ENCODE measurements at regions of chr9 and their contacts with region 1.

Region 1: DNA sequence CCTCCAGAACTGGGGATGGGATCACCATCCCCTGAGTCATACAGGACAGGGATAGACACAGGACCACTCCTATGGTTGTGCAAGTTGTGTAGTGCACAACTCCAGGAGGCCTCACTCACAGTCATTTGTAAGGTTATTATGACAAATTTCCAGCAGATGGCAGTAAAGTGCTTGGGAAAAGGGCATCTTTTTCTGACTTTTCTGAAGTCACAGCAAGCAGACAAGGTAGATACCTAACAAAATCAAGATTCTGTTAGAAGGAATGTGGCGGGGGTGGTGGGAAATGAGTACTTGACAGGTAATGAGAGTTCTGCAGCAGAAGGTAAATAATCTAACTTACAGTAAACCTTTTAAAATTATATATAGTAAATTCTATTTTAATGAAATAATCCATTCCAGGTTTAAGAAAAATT is 16.7 kb upstream of the KIF27 start:
- DNase-seq: no peak
- H3K4me3 ChIP-seq: no peak overlapping the region
- H3K27ac ChIP-seq: no peak overlapping the region
- H3K4me1 ChIP-seq: peaks cover 0 to 10% (median 4%) of the 10 kb centered on the region in 4 donors
- H3K27me3 ChIP-seq: no peaks in the 10 kb centered on the region
- CTCF ChIP-seq: peak; percentile 25 to 63 (median 53)
- EP300 ChIP-seq: no peak
- POLR2A ChIP-seq: no peak

Region 2: DNA sequence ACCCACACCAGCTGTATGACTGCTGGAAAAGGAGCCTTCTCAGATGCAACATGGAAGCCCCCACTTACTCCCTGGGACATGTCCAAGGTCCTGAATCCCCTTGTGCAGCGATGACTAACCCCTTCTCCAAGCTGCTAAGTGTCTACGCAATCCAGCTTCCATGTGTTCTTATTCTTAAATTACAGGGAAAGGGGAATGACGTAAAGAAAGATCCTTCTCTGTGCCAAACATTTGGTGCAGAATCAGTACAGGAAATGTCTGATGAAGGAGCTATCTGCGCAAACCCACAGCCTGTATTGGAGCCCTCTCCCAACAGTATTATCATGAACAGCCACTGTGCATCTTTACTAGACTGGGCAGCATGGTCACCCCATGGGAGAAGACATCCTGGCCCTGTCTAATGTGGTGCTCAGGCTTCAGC is 582.9 kb before region 1 on chr9:
- intact Hi-C with region 1: no loop called
- DNase-seq: peak; percentile 73
- H3K4me3 ChIP-seq: no peak overlapping the region
- H3K27ac ChIP-seq: peak overlapping the region in 3 of 4 donors; percentile 30 to 61 (median 51)
- H3K4me1 ChIP-seq: no peaks in the 10 kb centered on the region
- H3K27me3 ChIP-seq: no peaks in the 10 kb centered on the region
- CTCF ChIP-seq: no peak
- EP300 ChIP-seq: no peak
- POLR2A ChIP-seq: no peak

Region 3: GRCh38 chr9:84170521-84171141 is 232.7 kb after region 1 on chr9:
- intact Hi-C with region 1: loop called (anchors 5 kb)
- DNase-seq: peak; percentile 90
- H3K4me3 ChIP-seq: no peak overlapping the region
- H3K27ac ChIP-seq: peak overlapping the region; percentile 8 to 75 (median 54)
- H3K4me1 ChIP-seq: peaks cover 0 to 24% (median 15%) of the 10 kb centered on the region in 4 donors
- H3K27me3 ChIP-seq: no peaks in the 10 kb centered on the region
- CTCF ChIP-seq: peak in 1 of 4 experiments; percentile 13
- EP300 ChIP-seq: no peak
- POLR2A ChIP-seq: no peak

Region 4: DNA sequence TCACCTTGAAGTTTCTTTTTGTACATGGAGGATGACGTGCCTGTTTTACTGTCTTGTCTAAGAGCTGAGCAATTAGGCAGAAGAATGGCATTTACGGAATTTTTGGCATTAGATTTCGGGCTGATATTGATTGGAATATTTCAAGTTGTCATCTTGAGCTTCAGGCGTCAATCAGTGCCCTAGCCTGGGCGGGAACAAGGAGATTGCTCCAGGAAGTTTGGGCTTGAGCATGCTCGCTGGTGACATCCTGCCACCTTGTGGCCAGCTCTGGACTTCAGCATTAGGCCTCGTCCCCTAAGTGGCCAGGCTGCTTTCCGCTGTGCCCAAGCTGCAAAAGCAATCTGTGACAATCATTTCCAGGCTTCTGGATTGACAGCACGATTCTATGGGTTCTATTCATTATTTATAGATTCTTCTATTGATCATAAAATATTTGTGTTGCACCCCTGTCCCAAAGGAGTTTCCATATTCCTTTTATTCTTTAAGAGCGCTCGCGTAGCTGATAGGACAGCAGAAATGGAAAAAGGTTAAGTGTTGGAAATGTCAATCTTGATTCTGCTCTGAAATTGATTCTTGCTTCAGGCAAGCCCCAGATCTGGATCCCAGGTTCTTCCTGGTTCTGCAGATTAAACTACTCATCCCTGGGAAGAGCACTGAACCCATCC is 323.3 kb after region 1 on chr9:
- intact Hi-C with region 1: loop called (anchors 1 kb)
- DNase-seq: peak; percentile 86
- H3K4me3 ChIP-seq: peak overlapping the region; percentile 3 to 42 (median 34)
- H3K27ac ChIP-seq: no peak overlapping the region
- H3K4me1 ChIP-seq: no peaks in the 10 kb centered on the region
- H3K27me3 ChIP-seq: peaks cover 0 to 10% (median 0%) of the 10 kb centered on the region in 3 donors
- CTCF ChIP-seq: peak; percentile 68 to 90 (median 85)
- EP300 ChIP-seq: no peak
- POLR2A ChIP-seq: no peak

Region 5: GRCh38 chr9:84315278-84315877 is 377.5 kb after region 1 on chr9:
- intact Hi-C with region 1: loop called (anchors 5 kb)
- DNase-seq: no peak
- H3K4me3 ChIP-seq: no peak overlapping the region
- H3K27ac ChIP-seq: no peak overlapping the region
- H3K4me1 ChIP-seq: no peaks in the 10 kb centered on the region
- H3K27me3 ChIP-seq: no peaks in the 10 kb centered on the region
- CTCF ChIP-seq: peak; percentile 24 to 74 (median 54)
- EP300 ChIP-seq: no peak
- POLR2A ChIP-seq: no peak